ENCODE measurements at regions of chr5 and their contacts with region 1.

Region 1: DNA sequence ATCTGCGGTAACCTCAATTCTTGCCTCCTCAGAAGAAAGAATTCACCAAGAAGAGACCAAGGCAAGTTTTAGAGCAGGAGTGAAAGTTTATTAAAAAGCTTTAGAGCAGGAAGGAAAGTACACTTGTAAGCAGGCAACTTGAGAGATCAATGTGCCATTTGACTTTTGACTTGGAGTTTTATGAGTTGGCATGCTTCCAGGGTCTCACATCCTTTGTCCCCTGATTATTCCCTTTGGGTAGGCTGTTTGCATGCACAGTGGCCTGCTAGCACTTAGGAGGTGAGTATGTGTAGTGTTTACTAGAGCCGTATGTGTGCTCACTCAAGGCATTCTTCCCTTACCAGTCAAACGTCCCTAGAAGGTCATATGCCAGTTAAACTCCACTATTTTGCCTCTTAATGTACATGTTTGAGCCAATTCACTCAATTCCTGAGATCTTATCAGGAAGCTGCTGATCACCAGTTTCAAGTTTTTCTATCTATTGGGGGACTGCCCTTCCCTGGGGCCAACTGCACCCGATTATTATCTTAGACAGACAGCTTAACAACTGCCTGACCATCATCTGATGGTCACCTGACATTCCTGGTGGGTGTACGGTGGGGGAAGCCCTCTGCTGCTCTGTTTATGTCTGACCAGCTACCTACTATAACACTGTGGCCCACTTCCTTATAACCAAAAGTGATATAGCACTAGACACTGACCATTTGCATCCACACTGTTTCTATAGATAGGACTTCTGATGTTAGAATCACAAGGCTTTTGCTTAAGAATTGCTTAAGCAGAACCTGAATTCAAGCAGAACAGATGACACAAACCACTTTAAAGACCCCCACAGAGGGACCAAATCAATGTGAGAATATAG is 110.7 kb upstream of the RAI14 start:
- DNase-seq: no peak
- ATAC-seq: no peak
- H3K4me3 ChIP-seq: no peak overlapping the region
- H3K4me3 Mint-ChIP-seq: no peak overlapping the region
- H3K27ac ChIP-seq: no peak overlapping the region
- H3K27ac Mint-ChIP-seq: no peak overlapping the region
- H3K4me1 ChIP-seq: no peaks in the 10 kb centered on the region
- H3K4me1 Mint-ChIP-seq: no peaks in the 10 kb centered on the region
- H3K27me3 ChIP-seq: peaks cover 0 to 5% of the 10 kb centered on the region in 2 experiments
- H3K27me3 Mint-ChIP-seq: peaks cover 20 to 28% of the 10 kb centered on the region in 2 donors

Region 2: GRCh38 chr5:34517249-34517648 is 28.1 kb before region 1 on chr5:
- CTCF ChIA-PET with region 1: no interaction called
- POLR2A ChIA-PET with region 1: interaction called in 1 of 2 experiments, 10 read pairs
- DNase-seq: no peak
- ATAC-seq: no peak
- H3K4me3 ChIP-seq: no peak overlapping the region
- H3K4me3 Mint-ChIP-seq: no peak overlapping the region
- H3K27ac ChIP-seq: no peak overlapping the region
- H3K27ac Mint-ChIP-seq: no peak overlapping the region
- H3K4me1 ChIP-seq: no peaks in the 10 kb centered on the region
- H3K4me1 Mint-ChIP-seq: no peaks in the 10 kb centered on the region
- H3K27me3 ChIP-seq: peaks cover 0 to 2% of the 10 kb centered on the region in 2 experiments
- H3K27me3 Mint-ChIP-seq: peaks cover 16 to 18% of the 10 kb centered on the region in 2 donors

Measured in T-cell (primary cell).